ENCODE measurements at regions of chr15 and their contacts with region 1.

Region 1: GRCh38 chr15:81023483-81024264 is 23.0 kb downstream of the TLNRD1 start:
- DNase-seq: peak; percentile 34
- H3K4me3 Mint-ChIP-seq: peak overlapping the region; percentile 10
- H3K27ac Mint-ChIP-seq: peak overlapping the region; percentile 92
- H3K4me1 Mint-ChIP-seq: peaks cover 35% of the 10 kb centered on the region
- H3K27me3 Mint-ChIP-seq: no peaks in the 10 kb centered on the region

Region 2: DNA sequence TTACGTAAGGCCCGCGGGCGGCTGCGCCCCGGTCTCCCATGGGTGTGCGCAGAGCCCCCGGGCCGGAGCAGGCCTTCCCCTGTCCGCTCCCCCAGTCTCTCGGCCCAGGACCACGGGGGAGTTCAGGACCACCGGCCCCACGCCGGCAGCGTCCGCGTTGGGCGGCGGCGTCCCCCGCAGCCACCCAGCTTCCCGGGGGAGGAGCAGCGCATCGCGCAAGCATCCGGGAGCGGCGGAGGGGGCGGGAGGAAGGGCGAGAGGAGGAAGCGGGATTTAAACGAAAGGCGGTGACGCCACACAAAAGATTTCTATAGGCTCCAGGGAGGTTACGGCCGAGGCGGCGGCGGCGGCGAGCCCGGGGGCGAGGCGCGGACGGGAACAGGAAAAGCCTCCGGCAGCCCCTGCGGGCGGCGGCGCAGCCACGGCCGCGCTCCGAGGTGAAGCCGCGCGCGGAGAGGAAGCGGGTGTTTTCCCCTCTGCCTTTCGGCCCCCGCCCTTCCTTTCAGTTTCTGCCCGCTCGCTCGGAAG is 23.0 kb before region 1 on chr15 and contains the start of gene TLNRD1:
- intact Hi-C with region 1: loop called (anchors 1 kb)
- DNase-seq: peak; percentile 89
- H3K4me3 Mint-ChIP-seq: peak within 1 kb of the TSS; percentile 93
- H3K27ac Mint-ChIP-seq: peak within 1 kb of the TSS; percentile 95
- H3K4me1 Mint-ChIP-seq: peaks cover 45% of the 10 kb centered on the region
- H3K27me3 Mint-ChIP-seq: no peaks in the 10 kb centered on the region
- total RNA-seq, gene TLNRD1: 18.5 and 19.1 TPM in 2 replicates

Region 3: DNA sequence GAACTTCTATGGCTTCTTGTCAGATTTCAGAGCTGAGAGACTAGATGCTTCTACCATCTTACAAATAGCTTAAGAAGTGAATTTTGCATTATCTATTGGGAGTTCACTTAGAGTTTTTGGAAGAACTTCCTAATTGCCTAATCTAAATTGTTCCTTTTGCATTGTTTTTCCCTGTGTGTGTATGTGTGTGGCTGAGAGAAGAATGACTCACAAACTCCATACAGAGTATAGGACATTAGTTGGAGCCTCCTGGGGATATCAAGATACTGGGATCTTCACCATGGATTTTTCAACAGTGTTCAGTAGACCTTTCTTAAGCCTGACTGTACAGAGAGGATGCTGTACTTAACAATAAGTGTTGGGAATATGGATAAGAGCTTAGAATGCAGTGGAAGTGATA is 12.1 kb before region 1 on chr15:
- intact Hi-C with region 1: no loop called
- DNase-seq: no peak
- H3K4me3 Mint-ChIP-seq: no peak overlapping the region
- H3K27ac Mint-ChIP-seq: no peak overlapping the region
- H3K4me1 Mint-ChIP-seq: peaks cover 27% of the 10 kb centered on the region
- H3K27me3 Mint-ChIP-seq: no peaks in the 10 kb centered on the region

Region 4: GRCh38 chr15:81071120-81071519 is 47.4 kb after region 1 on chr15:
- intact Hi-C with region 1: no loop called
- DNase-seq: no peak
- H3K4me3 Mint-ChIP-seq: no peak overlapping the region
- H3K27ac Mint-ChIP-seq: no peak overlapping the region
- H3K4me1 Mint-ChIP-seq: peaks cover 9% of the 10 kb centered on the region
- H3K27me3 Mint-ChIP-seq: peaks cover 9% of the 10 kb centered on the region

Region 5: GRCh38 chr15:81146006-81146405 is 122.3 kb after region 1 on chr15:
- intact Hi-C with region 1: no loop called
- DNase-seq: no peak
- H3K4me3 Mint-ChIP-seq: no peak overlapping the region
- H3K27ac Mint-ChIP-seq: no peak overlapping the region
- H3K4me1 Mint-ChIP-seq: no peaks in the 10 kb centered on the region
- H3K27me3 Mint-ChIP-seq: peaks cover 2% of the 10 kb centered on the region